ENCODE measurements at regions of chr13 and their contacts with region 1.

Region 1: DNA sequence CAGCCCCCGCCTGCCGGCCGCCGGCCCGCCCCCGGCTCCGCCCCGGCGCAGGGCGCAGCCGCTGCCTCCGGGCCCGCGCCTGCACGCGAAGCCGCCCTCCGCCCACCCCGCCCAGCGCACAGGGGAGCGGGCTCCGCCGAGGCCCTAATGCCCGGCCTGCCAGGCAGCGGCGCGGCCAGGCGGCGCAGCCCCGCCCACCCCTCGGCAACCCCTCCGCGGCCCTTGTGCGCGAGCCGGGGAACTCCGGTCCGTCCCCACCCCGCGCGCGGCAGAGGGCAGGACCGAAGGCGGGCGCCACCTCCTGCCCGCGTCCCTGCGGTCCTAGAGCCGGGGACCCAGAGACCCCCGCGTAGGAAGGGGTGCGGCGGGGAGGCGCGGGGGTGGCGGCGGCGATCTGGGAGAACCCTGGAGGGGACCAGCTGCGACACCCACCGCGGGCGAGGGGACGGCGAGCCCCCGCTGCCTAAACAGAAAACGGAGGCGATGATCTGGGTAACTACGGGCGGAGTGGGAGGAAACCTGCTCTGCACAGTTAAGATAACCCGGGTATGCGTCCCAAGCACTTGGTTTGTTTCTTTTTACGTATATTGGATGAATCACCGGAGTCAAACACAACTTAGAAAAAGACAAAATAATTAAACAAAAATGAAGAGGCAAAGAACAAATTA is 350 bp upstream of the USP12 start:
- DNase-seq: no peak
- ATAC-seq: peak; percentile 87
- H3K4me3 ChIP-seq: peak overlapping the region; percentile 59
- H3K27ac ChIP-seq: peak overlapping the region; percentile 74
- H3K4me1 ChIP-seq: peaks cover 11% of the 10 kb centered on the region
- H3K27me3 ChIP-seq: no peaks in the 10 kb centered on the region
- CTCF ChIP-seq: peak in 2 of 3 experiments; percentile 7 to 19; a peak in 1 of 6 replicates
- EP300 ChIP-seq: peak in 1 of 2 experiments; percentile 26; a peak in 1 of 4 replicates
- POLR2A ChIP-seq: peak; percentile 7; the same call in 1 of the 2 replicates
- RAD21 ChIP-seq: peak; percentile 23; the same call in 1 of the 2 replicates

Region 2: GRCh38 chr13:26253787-26254582 is 918.0 kb before region 1 on chr13 and contains the start of gene CDK8:
- CTCF ChIA-PET with region 1: no interaction called
- POLR2A ChIA-PET with region 1: no interaction called
- RAD21 ChIA-PET with region 1: no interaction called
- SMC1A ChIA-PET with region 1: no interaction called
- in situ Hi-C with region 1: no loop called
- intact Hi-C with region 1: no loop called
- DNase-seq: peak; percentile 48
- ATAC-seq: peak; percentile 89
- H3K4me3 ChIP-seq: peak within 1 kb of the TSS; percentile 80
- H3K27ac ChIP-seq: peak within 1 kb of the TSS; percentile 86
- H3K4me1 ChIP-seq: no peaks in the 10 kb centered on the region
- H3K27me3 ChIP-seq: no peaks in the 10 kb centered on the region; a peak in 1 of 4 replicates
- CTCF ChIP-seq: no peak
- EP300 ChIP-seq: no peak
- POLR2A ChIP-seq: peak; percentile 87
- RAD21 ChIP-seq: no peak
- polyA plus RNA-seq, gene CDK8: 9.9 to 10.6 TPM

Region 3: GRCh38 chr13:27259831-27260230 is 87.9 kb after region 1 on chr13:
- CTCF ChIA-PET with region 1: no interaction called
- POLR2A ChIA-PET with region 1: no interaction called
- RAD21 ChIA-PET with region 1: no interaction called
- SMC1A ChIA-PET with region 1: no interaction called
- in situ Hi-C with region 1: no loop called
- intact Hi-C with region 1: loop called (anchors 2 kb)
- DNase-seq: no peak
- ATAC-seq: peak; percentile 74
- H3K4me3 ChIP-seq: no peak overlapping the region
- H3K27ac ChIP-seq: 0 out of 2 replicates have a peak overlapping the region, but pooled peaks have one; percentile 22
- H3K4me1 ChIP-seq: peaks cover 9% of the 10 kb centered on the region; the same call in 1 of the 2 replicates
- H3K27me3 ChIP-seq: no peaks in the 10 kb centered on the region
- CTCF ChIP-seq: no peak
- EP300 ChIP-seq: no peak
- POLR2A ChIP-seq: no peak
- RAD21 ChIP-seq: no peak

Measured in GM12878 (cell line).